ENCODE measurements at regions of chr16 and their contacts with region 1.

Region 1: DNA sequence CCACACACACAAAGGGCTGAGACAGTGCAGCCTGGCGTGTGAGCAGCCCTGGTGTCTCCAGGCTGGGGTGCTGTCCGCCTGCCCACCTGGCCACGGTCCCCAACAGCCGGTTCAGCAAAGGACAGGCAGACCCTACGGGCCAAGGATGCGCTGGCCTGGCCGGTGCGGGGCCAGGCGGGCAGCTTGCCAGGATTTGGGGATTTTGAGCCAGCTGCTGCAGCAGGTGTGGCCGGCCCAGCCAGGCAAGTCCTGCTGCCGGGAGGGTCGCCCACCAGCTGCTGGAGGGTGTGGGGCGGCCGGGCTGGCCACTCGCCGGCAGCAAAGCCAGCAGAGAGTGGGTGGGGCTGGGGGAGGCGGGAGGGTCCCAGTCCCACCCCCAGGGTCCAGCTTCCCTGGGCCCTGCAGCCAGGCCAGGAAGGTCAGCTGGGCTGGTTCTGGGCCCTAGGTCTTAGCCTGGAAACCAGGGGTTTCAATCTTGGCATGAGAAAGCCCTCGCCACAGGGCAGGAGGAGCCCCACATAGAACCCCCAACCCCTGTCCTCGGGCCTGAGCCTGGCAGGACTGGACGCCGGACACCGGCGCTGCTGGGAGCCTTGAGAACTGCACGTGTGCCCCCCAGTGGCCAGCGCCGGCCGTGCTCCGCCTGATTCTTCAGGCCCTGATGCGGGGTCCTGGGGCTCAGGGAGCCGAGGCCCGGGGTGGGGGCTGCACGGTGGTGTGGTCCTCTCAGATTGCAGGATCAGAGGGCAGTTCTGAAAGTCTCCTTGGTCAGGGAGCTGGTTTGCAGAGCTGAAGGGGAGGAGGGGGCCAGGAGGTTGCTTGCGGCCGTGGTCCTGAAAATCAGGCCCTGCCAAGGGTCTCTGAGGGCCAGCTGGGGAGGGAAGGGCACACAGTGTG is 17.6 kb upstream of the SSTR5 start:
- DNase-seq: peak; percentile 51
- H3K4me3 ChIP-seq: no peak overlapping the region
- H3K27ac ChIP-seq: no peak overlapping the region
- H3K4me1 ChIP-seq: peaks cover 0 to 4% (median 0%) of the 10 kb centered on the region in 4 donors
- H3K27me3 ChIP-seq: peaks cover 47% of the 10 kb centered on the region
- CTCF ChIP-seq: peak; percentile 63 to 82 (median 76)
- EP300 ChIP-seq: no peak
- POLR2A ChIP-seq: no peak

Region 2: GRCh38 chr16:807347-808084 is 247.4 kb before region 1 on chr16:
- in situ Hi-C with region 1: loop called in 2 of 4 experiments (anchors 25 kb)
- intact Hi-C with region 1: loop called (anchors 5 kb)
- DNase-seq: peak; percentile 96
- H3K4me3 ChIP-seq: peak overlapping the region; percentile 53 to 98 (median 71)
- H3K27ac ChIP-seq: peak overlapping the region; percentile 93 to 97 (median 94)
- H3K4me1 ChIP-seq: peaks cover 3 to 15% (median 10%) of the 10 kb centered on the region in 4 donors
- H3K27me3 ChIP-seq: peaks cover 30% of the 10 kb centered on the region
- CTCF ChIP-seq: peak in 1 of 5 experiments; percentile 9
- EP300 ChIP-seq: no peak
- POLR2A ChIP-seq: peak; percentile 83

Region 3: DNA sequence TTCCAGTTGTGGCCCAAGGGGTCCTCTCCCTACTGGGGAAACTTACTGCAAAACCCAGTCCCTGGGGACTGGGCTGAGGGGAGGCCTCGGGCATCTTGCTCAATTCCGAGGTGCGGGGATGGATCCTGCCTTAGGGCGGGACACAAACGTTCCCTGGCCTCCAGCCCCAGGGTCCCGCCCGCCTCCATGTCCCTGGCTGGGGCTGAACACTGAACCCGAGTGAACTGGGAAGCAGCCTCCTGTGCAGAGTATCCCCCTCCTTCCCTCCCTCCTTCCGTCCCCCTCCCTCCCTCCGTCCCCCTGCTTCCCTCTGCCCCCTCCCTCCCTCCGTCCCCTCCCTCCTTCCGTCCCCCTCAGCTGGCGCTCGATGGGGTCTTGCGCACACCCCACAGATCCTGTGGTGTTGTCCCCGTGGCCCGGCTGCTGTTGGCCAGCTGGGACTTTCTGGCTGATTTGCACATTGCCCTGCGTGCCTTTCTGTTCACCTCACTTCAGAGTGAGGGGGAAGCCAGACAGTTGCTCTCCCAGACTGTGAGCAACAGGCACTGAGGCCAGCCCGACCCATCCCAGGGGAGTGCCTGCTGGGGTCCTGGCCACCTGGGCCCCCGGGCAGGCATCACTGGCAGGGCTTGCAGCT is 1106.1 kb after region 1 on chr16:
- in situ Hi-C with region 1: no loop called
- intact Hi-C with region 1: no loop called
- DNase-seq: peak; percentile 58
- H3K4me3 ChIP-seq: no peak overlapping the region
- H3K27ac ChIP-seq: peak overlapping the region; percentile 42 to 92 (median 90)
- H3K4me1 ChIP-seq: peaks cover 45 to 78% (median 74%) of the 10 kb centered on the region in 4 donors
- H3K27me3 ChIP-seq: no peaks in the 10 kb centered on the region
- CTCF ChIP-seq: no peak
- EP300 ChIP-seq: no peak
- POLR2A ChIP-seq: no peak